Mucosa of descending colon (tissue), 3 donors: ENCODE measurements at regions of chr12 and their contacts with region 1.

Region 1: GRCh38 chr12:27434673-27435565 is 11.6 kb upstream of the SMCO2 start:
- DNase-seq: peak in 1 of 3 donors; percentile 17
- ATAC-seq: peak; percentile 71
- H3K4me3 ChIP-seq: no peak overlapping the region
- H3K4me1 ChIP-seq: no peaks in the 10 kb centered on the region
- CTCF ChIP-seq: peak; percentile 20

Region 2: GRCh38 chr12:27644158-27644845 is 209.4 kb after region 1 on chr12:
- intact Hi-C with region 1: loop called in 1 of 2 experiments (anchors 10 kb)
- DNase-seq: no peak
- ATAC-seq: no peak
- H3K4me3 ChIP-seq: no peak overlapping the region
- H3K4me1 ChIP-seq: no peaks in the 10 kb centered on the region
- CTCF ChIP-seq: no peak

Region 3: DNA sequence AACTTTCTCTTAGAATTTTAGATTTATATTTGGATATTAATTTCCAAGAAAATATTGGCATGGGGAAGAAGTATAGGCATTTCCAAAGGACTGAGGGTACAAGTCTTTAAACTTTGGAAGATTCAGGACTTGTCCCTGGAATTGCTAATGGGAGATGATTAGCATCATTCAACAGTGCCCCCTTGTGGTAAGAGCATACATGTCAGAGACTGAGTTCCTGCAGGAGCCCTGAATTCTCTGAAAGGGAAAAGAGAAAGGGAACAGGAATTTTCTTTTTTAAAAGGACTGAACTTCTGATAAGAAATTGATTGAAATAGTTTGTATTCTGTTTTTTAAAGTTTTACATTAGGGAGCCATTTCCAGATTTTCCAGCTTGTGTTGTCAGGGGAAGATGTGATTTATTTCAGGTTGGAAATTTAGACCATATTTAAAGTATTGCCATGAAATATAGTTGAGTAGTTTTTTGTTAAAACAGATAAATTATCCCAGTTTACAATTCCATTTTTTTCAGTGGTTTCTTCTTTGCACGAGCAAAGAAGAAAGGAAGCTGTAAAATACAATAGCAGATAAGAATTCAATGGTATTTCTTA is 217.3 kb after region 1 on chr12:
- intact Hi-C with region 1: loop called (anchors 10 kb)
- DNase-seq: peak in 1 of 3 donors; percentile 86
- ATAC-seq: peak; percentile 79
- H3K4me3 ChIP-seq: no peak overlapping the region
- H3K4me1 ChIP-seq: no peaks in the 10 kb centered on the region
- CTCF ChIP-seq: peak; percentile 77